ENCODE measurements at regions of chr6 and their contacts with region 1.

Region 1: DNA sequence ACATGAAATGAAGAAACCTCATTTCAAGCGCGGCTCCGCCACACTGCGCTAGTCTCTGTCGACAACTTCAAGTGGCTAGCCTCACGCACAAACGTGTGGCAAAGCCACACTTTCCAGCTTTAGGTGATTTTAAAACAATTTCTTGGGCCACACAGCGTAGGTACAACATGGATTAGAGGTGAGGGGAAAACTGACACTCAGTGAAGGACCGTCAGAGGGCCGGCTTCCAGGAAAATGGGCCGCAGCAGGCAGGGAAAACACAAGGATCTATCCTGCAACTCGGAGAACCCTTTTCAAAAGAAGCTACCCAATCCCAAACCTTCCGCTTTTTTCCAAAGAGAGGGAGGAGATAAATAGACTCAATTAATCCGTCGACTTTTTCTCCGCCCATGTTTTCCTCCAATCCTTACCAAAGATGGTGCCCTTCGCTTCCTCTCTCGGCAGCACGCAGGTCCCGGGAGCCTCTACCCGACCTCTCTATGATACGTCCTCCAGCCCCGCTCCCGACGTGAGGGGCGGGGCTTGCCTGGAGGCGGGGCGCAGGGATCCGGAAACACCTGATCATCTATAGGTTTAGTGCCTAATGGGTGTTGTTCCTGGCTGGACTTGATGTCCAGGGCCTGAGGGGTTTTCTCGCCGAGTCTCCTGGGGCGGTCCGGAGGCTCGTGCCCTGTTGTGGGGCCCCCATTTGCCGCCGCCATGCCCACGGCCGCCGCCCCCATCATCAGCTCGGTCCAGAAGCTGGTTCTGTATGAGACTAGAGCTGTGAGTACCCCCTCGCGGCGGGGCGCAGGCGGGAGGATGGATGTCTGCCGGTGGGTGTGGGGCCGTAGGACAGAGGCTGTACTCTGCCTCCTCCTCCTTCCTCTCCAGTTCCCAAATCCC is at the starts of genes AK9 and FIG4:
- DNase-seq: peak; percentile 84 to 92 (median 85)
- H3K4me3 ChIP-seq: peak within 1 kb of the TSS; percentile 76 to 96 (median 95)
- H3K4me3 Mint-ChIP-seq: peak within 1 kb of the TSS; percentile 87 to 95
- H3K27ac ChIP-seq: peak within 1 kb of the TSS; percentile 82 to 96
- H3K27ac Mint-ChIP-seq: peak within 1 kb of the TSS; percentile 92 to 96 (median 93)
- H3K4me1 ChIP-seq: peaks cover 38 to 53% of the 10 kb centered on the region in 2 donors
- H3K4me1 Mint-ChIP-seq: peaks cover 55% of the 10 kb centered on the region
- H3K27me3 ChIP-seq: no peaks in the 10 kb centered on the region
- H3K27me3 Mint-ChIP-seq: peaks cover 0 to 4% (median 0%) of the 10 kb centered on the region in 3 donors
- CTCF ChIP-seq: no peak
- polyA plus RNA-seq, gene AK9: 2.6 to 3.1 (median 2.8) TPM
- polyA plus RNA-seq, gene FIG4: 27.2 to 65.3 (median 53.7) TPM

Region 2: DNA sequence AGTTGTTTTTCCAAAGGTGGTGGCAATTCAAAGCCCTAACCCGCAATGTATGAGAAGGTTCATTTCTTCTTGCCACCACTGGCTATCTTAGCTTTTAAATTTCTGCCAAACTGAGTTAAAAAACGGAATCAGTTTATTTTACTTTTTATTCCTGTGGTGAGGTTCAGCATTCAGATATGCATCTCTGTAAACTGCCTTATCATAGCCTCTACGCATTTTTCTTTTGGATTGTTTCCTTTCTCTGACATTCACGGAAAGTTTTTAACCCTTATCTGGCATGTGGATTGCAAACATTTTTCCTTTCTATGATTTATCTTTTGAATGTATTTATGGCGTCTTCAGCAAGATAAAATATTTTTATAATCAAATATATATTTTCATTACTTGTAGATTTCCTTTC is 37.7 kb before region 1 on chr6:
- intact Hi-C with region 1: no loop called
- DNase-seq: no peak
- H3K4me3 ChIP-seq: no peak overlapping the region
- H3K4me3 Mint-ChIP-seq: no peak overlapping the region
- H3K27ac ChIP-seq: no peak overlapping the region
- H3K27ac Mint-ChIP-seq: no peak overlapping the region
- H3K4me1 ChIP-seq: no peaks in the 10 kb centered on the region
- H3K4me1 Mint-ChIP-seq: no peaks in the 10 kb centered on the region
- H3K27me3 ChIP-seq: no peaks in the 10 kb centered on the region
- H3K27me3 Mint-ChIP-seq: peaks cover 0 to 2% (median 0%) of the 10 kb centered on the region in 3 donors
- CTCF ChIP-seq: no peak

Region 3: GRCh38 chr6:110179401-110180227 is 488.6 kb after region 1 on chr6 and contains the start of gene WASF1:
- intact Hi-C with region 1: loop called in 1 of 2 experiments (anchors 10 kb)
- DNase-seq: peak; percentile 89 to 92 (median 91)
- H3K4me3 ChIP-seq: peak within 1 kb of the TSS; percentile 76 to 98 (median 93)
- H3K4me3 Mint-ChIP-seq: peak within 1 kb of the TSS in 1 of 2 donors; percentile 94
- H3K27ac ChIP-seq: peak within 1 kb of the TSS; percentile 78 to 99
- H3K27ac Mint-ChIP-seq: peak within 1 kb of the TSS in 6 of 7 donors; percentile 2 to 49 (median 16)
- H3K4me1 ChIP-seq: peaks cover 35 to 52% of the 10 kb centered on the region in 2 donors
- H3K4me1 Mint-ChIP-seq: peaks cover 5% of the 10 kb centered on the region
- H3K27me3 ChIP-seq: no peaks in the 10 kb centered on the region
- H3K27me3 Mint-ChIP-seq: peaks cover 0 to 5% (median 5%) of the 10 kb centered on the region in 3 donors
- CTCF ChIP-seq: no peak
- polyA plus RNA-seq, gene WASF1: 0.32 to 1.7 (median 1.4) TPM

Measured in CD14-positive monocyte (primary cell).